ENCODE measurements at regions of chr13 and their contacts with region 1.

Region 1: GRCh38 chr13:91817250-91817649 is 418.8 kb downstream of the GPC5 start:
- DNase-seq: peak; percentile 26
- H3K4me3 Mint-ChIP-seq: no peak overlapping the region
- H3K27ac Mint-ChIP-seq: no peak overlapping the region
- H3K4me1 Mint-ChIP-seq: no peaks in the 10 kb centered on the region
- H3K27me3 Mint-ChIP-seq: peaks cover 91% of the 10 kb centered on the region
- CTCF ChIP-seq: peak; percentile 33

Region 2: DNA sequence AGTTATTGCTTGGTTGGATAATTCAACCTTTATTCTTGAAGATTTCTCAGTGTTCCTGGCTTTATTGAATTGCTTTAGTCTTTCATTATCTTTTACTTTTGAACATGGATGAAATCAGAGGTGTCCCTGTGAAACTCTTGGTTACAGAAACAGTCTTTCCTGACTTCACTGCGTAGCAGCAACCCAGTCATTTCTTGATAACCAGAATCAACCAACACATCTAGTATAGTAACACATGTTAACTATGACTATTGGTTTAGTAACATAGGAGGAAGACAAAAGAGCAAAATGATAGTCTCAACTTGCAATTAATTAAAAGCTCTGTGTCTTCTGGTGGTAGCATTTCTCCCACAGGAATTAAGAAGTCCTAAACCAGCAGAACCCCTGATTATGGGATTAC is 25.2 kb before region 1 on chr13:
- CTCF ChIA-PET with region 1: no interaction called
- POLR2A ChIA-PET with region 1: no interaction called
- intact Hi-C with region 1: no loop called
- DNase-seq: no peak
- H3K4me3 Mint-ChIP-seq: no peak overlapping the region
- H3K27ac Mint-ChIP-seq: no peak overlapping the region
- H3K4me1 Mint-ChIP-seq: no peaks in the 10 kb centered on the region
- H3K27me3 Mint-ChIP-seq: peaks cover 68% of the 10 kb centered on the region
- CTCF ChIP-seq: no peak

Region 3: GRCh38 chr13:91836554-91836953 is 19.3 kb after region 1 on chr13:
- CTCF ChIA-PET with region 1: no interaction called
- POLR2A ChIA-PET with region 1: no interaction called
- intact Hi-C with region 1: no loop called
- DNase-seq: no peak
- H3K4me3 Mint-ChIP-seq: no peak overlapping the region
- H3K27ac Mint-ChIP-seq: no peak overlapping the region
- H3K4me1 Mint-ChIP-seq: no peaks in the 10 kb centered on the region
- H3K27me3 Mint-ChIP-seq: peaks cover 41% of the 10 kb centered on the region
- CTCF ChIP-seq: no peak

Region 4: DNA sequence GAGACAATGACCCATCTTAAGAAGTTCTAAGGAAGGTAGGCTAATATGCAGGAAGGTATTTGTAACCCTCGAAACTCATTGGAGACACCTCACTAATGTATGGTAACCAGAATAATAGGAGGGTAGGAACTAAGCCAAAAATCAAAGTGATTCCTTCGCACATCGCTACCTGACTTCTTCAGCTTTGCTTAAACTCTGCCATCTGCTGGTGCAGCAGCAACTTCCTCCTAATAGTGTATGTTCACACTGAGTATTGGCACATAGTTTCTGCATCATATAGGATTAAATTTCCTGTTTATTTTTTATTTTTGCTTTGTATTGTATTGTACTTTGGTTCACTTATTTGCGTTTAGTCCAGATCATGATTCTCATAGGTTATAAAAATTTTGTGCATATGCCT is 257.4 kb after region 1 on chr13:
- CTCF ChIA-PET with region 1: interaction called, 3 read pairs
- POLR2A ChIA-PET with region 1: no interaction called
- intact Hi-C with region 1: loop called (anchors 10 kb)
- DNase-seq: peak; percentile 29
- H3K4me3 Mint-ChIP-seq: no peak overlapping the region
- H3K27ac Mint-ChIP-seq: no peak overlapping the region
- H3K4me1 Mint-ChIP-seq: no peaks in the 10 kb centered on the region
- H3K27me3 Mint-ChIP-seq: peaks cover 27% of the 10 kb centered on the region
- CTCF ChIP-seq: peak; percentile 30

Measured in MCF 10A (cell line).